ENCODE measurements at regions of chrX and their contacts with region 1.

Region 1: GRCh38 chrX:9464435-9465371 is at the start of gene TBL1X:
- DNase-seq: peak; percentile 47 to 69
- ATAC-seq: peak; percentile 53 to 72 (median 66)
- H3K4me3 ChIP-seq: peak within 1 kb of the TSS; percentile 44 to 77 (median 71)
- H3K27ac ChIP-seq: peak within 1 kb of the TSS; percentile 52 to 84 (median 78)
- H3K4me1 ChIP-seq: peaks cover 0 to 46% (median 14%) of the 10 kb centered on the region in 9 donors
- H3K27me3 ChIP-seq: peaks cover 0 to 86% (median 0%) of the 10 kb centered on the region in 7 donors
- CTCF ChIP-seq: no peak
- total RNA-seq, gene TBL1X: 6.5 to 14.1 (median 10.2) TPM

Region 2: GRCh38 chrX:9341291-9342201 is 123.2 kb before region 1 on chrX:
- intact Hi-C with region 1: loop called in 8 of 10 experiments (anchors 2 to 10 kb)
- DNase-seq: peak; percentile 57 to 71
- ATAC-seq: peak in 5 of 8 donors; percentile 16 to 42 (median 19)
- H3K4me3 ChIP-seq: peak overlapping the region in 8 of 10 donors; percentile 5 to 34 (median 30)
- H3K27ac ChIP-seq: peak overlapping the region; percentile 34 to 95 (median 75)
- H3K4me1 ChIP-seq: peaks cover 0 to 40% (median 21%) of the 10 kb centered on the region in 9 donors
- H3K27me3 ChIP-seq: peaks cover 0 to 12% (median 0%) of the 10 kb centered on the region in 7 donors
- CTCF ChIP-seq: peak in 1 of 9 donors; percentile 11

Region 3: DNA sequence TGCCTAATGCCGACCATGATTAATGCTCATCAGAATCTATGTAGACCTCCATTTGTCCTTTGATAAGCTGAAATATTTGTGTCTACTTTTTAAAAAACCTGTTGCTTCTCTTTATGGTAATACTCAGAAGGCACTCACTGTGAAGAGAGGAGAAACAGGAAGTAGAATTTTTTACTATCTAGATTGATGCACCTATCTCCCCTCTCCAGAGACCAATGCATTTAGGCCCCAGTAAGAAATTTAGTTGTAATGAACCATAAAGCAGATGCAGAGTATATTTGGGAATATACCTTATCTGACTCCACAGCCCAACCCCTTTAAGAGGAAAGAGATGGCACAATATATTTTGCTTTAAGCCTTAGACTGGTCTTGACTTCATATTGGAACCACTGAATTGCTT is 11.3 kb after region 1 on chrX:
- intact Hi-C with region 1: no loop called
- DNase-seq: no peak
- ATAC-seq: no peak
- H3K4me3 ChIP-seq: no peak overlapping the region
- H3K27ac ChIP-seq: no peak overlapping the region
- H3K4me1 ChIP-seq: peaks cover 0 to 12% (median 0%) of the 10 kb centered on the region in 9 donors
- H3K27me3 ChIP-seq: peaks cover 0 to 32% (median 0%) of the 10 kb centered on the region in 7 donors
- CTCF ChIP-seq: no peak

Region 4: DNA sequence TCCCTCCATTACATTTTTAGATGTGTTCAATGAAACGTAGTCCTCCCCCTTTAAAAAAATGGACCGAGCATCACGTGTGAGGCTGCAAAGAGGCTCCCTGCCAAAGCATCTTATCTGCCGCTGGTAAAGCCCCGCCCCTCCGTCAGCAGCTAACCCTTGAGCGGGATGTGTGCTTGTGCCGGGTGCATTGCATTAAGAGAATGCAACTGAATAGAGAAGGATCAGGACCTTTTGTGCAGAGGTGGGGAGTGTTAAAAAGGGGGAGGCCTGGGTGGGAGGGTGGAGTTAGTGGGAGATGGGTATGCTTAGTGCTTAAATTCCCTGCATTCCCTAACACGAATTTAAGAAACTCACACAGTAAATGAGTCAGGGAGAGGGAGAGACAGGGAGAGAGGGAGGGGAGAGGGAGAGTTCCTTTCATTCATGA is 66.2 kb after region 1 on chrX:
- intact Hi-C with region 1: loop called in 1 of 10 experiments (anchors 10 kb)
- DNase-seq: peak; percentile 63 to 72
- ATAC-seq: peak; percentile 65 to 95 (median 92)
- H3K4me3 ChIP-seq: no peak overlapping the region
- H3K27ac ChIP-seq: no peak overlapping the region
- H3K4me1 ChIP-seq: peaks cover 0 to 34% (median 19%) of the 10 kb centered on the region in 9 donors
- H3K27me3 ChIP-seq: peaks cover 0 to 37% (median 0%) of the 10 kb centered on the region in 7 donors
- CTCF ChIP-seq: no peak

Region 5: GRCh38 chrX:9573282-9574106 is 108.8 kb after region 1 on chrX:
- intact Hi-C with region 1: loop called in 1 of 10 experiments (anchors 10 kb)
- DNase-seq: no peak
- ATAC-seq: no peak
- H3K4me3 ChIP-seq: no peak overlapping the region
- H3K27ac ChIP-seq: no peak overlapping the region
- H3K4me1 ChIP-seq: peaks cover 0 to 8% (median 0%) of the 10 kb centered on the region in 9 donors
- H3K27me3 ChIP-seq: peaks cover 0 to 7% (median 0%) of the 10 kb centered on the region in 7 donors
- CTCF ChIP-seq: no peak

Region 6: GRCh38 chrX:9662148-9662547 is 197.4 kb after region 1 on chrX:
- intact Hi-C with region 1: loop called in 1 of 10 experiments (anchors 10 kb)
- DNase-seq: no peak
- ATAC-seq: peak in 2 of 8 donors; percentile 61 to 70
- H3K4me3 ChIP-seq: no peak overlapping the region
- H3K27ac ChIP-seq: no peak overlapping the region
- H3K4me1 ChIP-seq: no peaks in the 10 kb centered on the region
- H3K27me3 ChIP-seq: no peaks in the 10 kb centered on the region
- CTCF ChIP-seq: no peak

Region 7: DNA sequence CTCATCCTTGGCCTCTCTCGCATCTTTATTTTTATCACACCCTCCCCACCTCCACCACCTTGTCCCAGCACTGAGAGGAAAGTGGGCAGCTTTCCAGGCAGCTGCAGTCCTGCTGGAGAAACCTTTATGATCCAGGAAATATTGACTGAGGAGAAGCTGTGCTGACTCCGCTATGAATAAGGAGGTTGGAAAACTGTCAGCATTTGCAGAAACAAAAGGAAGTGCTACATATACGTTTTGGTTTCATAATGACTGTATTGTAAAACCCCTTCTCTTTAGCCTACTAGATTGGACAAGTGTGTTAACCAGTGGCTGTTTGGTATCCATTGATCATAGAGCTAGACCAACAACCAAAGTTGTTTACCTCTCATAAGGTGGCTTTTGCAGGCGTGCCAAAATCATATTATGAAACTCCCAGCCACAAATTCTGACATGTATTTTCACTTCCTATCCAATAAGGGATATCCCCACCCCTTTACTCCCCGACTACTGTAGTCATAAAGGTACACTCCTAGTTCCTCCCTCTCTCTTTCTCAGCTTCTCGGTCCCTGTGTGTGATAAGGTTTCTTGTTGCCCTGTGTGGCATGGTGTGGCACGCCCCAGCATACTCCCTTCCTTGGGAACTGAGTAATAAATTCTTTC is 212.5 kb after region 1 on chrX:
- intact Hi-C with region 1: loop called in 1 of 10 experiments (anchors 10 kb)
- DNase-seq: peak; percentile 16 to 17
- ATAC-seq: peak in 7 of 8 donors; percentile 40 to 74 (median 57)
- H3K4me3 ChIP-seq: no peak overlapping the region
- H3K27ac ChIP-seq: peak overlapping the region in 2 of 10 donors; percentile 9 to 51
- H3K4me1 ChIP-seq: peaks cover 0 to 13% (median 0%) of the 10 kb centered on the region in 9 donors
- H3K27me3 ChIP-seq: no peaks in the 10 kb centered on the region
- CTCF ChIP-seq: no peak

Measured in heart right ventricle (tissue), 16 donors.